HepG2 (cell line): ENCODE measurements at regions of chr17 and their contacts with region 1.

Region 1: DNA sequence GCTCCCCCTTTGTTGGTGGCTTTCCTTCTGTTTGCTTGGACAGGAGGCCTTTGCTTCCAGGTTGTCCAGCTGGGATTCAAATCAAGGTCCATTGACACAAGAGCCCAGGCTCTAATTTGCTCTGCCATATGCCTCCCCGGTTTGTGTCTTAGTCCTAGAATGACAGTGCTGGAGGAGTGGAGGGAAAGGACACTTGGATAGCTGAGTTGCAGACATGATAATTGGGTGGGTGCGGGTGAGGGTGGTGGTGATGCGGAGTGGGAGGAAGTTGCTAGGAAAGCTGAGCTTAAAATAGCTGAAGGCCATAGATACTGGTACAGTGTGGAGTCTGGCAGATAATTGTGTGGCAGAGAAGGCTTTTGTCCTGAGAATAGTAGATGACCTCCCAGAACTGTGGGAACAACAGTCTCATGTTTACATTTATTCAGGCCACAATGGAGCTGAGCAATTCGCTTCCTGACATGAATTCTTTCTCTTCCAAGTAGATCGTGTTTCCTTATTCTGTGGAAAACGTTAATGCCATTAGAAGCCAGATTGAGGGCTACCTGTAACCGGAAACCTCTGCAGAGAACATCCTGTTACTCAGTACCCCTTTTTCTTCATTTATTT is 23.8 kb downstream of the SEC14L1 start:
- DNase-seq: peak; percentile 43
- ATAC-seq: peak; percentile 40
- H3K4me3 ChIP-seq: no peak overlapping the region
- H3K27ac ChIP-seq: peak overlapping the region; percentile 3
- H3K4me1 ChIP-seq: peaks cover 59% of the 10 kb centered on the region
- H3K27me3 ChIP-seq: no peaks in the 10 kb centered on the region
- CTCF ChIP-seq: no peak
- EP300 ChIP-seq: no peak
- POLR2A ChIP-seq: no peak
- RAD21 ChIP-seq: no peak

Region 2: DNA sequence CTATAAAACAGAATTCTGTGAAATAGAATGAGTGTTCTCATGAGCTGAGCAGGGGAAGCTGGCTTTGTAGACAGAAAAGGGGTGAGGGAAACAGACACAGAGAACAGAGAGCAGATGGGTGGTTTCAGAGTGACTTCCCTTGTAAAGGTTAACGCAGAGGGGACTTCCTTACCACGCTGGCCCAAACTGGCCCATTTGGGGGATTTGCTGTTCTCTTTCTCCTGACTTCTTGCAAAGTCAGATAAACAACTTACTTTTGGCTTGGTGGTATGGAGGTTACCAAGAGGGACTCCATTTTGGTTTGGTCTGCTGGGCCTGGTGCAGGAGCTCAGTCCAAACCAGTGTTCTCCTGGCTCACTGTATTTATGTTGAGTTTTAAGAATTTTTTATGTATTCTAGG is 24.6 kb after region 1 on chr17:
- CTCF ChIA-PET with region 1: no interaction called
- POLR2A ChIA-PET with region 1: no interaction called
- in situ Hi-C with region 1: no loop called
- intact Hi-C with region 1: loop called (anchors 2 kb)
- DNase-seq: no peak
- ATAC-seq: no peak
- H3K4me3 ChIP-seq: no peak overlapping the region
- H3K27ac ChIP-seq: no peak overlapping the region
- H3K4me1 ChIP-seq: peaks cover 33% of the 10 kb centered on the region
- H3K27me3 ChIP-seq: no peaks in the 10 kb centered on the region
- CTCF ChIP-seq: no peak
- EP300 ChIP-seq: no peak
- POLR2A ChIP-seq: no peak
- RAD21 ChIP-seq: no peak